ENCODE measurements at regions of chr4 and their contacts with region 1.

Region 1: GRCh38 chr4:22962295-22962694 is 269.6 kb downstream of the GBA3 start:
- DNase-seq: no peak
- H3K4me3 ChIP-seq: no peak overlapping the region
- H3K27ac ChIP-seq: no peak overlapping the region
- H3K4me1 ChIP-seq: no peaks in the 10 kb centered on the region
- H3K27me3 ChIP-seq: no peaks in the 10 kb centered on the region
- CTCF ChIP-seq: peak; percentile 28 to 44 (median 39)
- EP300 ChIP-seq: no peak
- POLR2A ChIP-seq: no peak

Region 2: GRCh38 chr4:21680326-21680898 is 1281.9 kb before region 1 on chr4:
- in situ Hi-C with region 1: no loop called
- intact Hi-C with region 1: loop called (anchors 5 kb)
- DNase-seq: no peak
- H3K4me3 ChIP-seq: no peak overlapping the region
- H3K27ac ChIP-seq: no peak overlapping the region
- H3K4me1 ChIP-seq: no peaks in the 10 kb centered on the region
- H3K27me3 ChIP-seq: no peaks in the 10 kb centered on the region
- CTCF ChIP-seq: no peak
- EP300 ChIP-seq: no peak
- POLR2A ChIP-seq: no peak

Region 3: GRCh38 chr4:22778547-22779163 is 183.6 kb before region 1 on chr4:
- in situ Hi-C with region 1: no loop called
- intact Hi-C with region 1: no loop called
- DNase-seq: no peak
- H3K4me3 ChIP-seq: no peak overlapping the region
- H3K27ac ChIP-seq: no peak overlapping the region
- H3K4me1 ChIP-seq: no peaks in the 10 kb centered on the region
- H3K27me3 ChIP-seq: no peaks in the 10 kb centered on the region
- CTCF ChIP-seq: no peak
- EP300 ChIP-seq: no peak
- POLR2A ChIP-seq: no peak

Measured in transverse colon (tissue), 4 donors.